Dendritic cell treated with granulocyte-macrophage colony-stimulating factor and Interleukin-4, amounts not matched to agents 40 ng/mL and 50 ng/mL, for 4 days (primary cell): ENCODE measurements at regions of chr12 and their contacts with region 1.

Region 1: GRCh38 chr12:50924439-50925341 is 27.7 kb upstream of the HIGD1C start:
- H3K4me3 Mint-ChIP-seq: peak overlapping the region; percentile 99
- H3K27ac Mint-ChIP-seq: peak overlapping the region; percentile 97
- H3K4me1 Mint-ChIP-seq: peaks cover 38% of the 10 kb centered on the region
- H3K27me3 Mint-ChIP-seq: no peaks in the 10 kb centered on the region

Region 2: DNA sequence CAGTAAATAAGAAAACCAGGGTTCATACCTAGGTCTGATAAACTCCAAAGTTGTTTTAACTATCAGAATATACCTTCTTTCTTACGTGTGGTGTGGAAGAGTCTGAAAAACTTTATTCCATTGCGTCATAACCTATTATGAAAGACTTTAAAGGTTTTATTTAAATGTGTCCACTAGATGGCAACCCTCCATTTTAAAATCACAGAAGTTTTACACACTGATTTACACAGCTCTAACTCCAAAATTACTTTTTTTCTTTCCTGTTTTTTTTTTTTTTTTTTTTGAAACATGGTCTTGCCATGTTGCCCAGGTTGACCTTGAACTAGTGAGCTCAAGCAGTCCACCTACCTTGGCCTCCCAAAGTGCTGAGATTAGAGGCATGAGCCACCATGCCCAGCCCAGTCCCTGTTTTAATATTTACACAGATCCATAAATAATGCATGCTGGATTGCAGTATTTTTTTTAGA is 99.3 kb before region 1 on chr12:
- intact Hi-C with region 1: loop called (anchors 5 kb)
- H3K4me3 Mint-ChIP-seq: no peak overlapping the region
- H3K27ac Mint-ChIP-seq: no peak overlapping the region
- H3K4me1 Mint-ChIP-seq: peaks cover 14% of the 10 kb centered on the region
- H3K27me3 Mint-ChIP-seq: no peaks in the 10 kb centered on the region

Region 3: GRCh38 chr12:51009056-51009440 is 84.4 kb after region 1 on chr12:
- intact Hi-C with region 1: loop called (anchors 5 kb)
- H3K4me3 Mint-ChIP-seq: peak overlapping the region; percentile 87
- H3K27ac Mint-ChIP-seq: peak overlapping the region; percentile 96
- H3K4me1 Mint-ChIP-seq: peaks cover 82% of the 10 kb centered on the region
- H3K27me3 Mint-ChIP-seq: no peaks in the 10 kb centered on the region